ENCODE measurements at regions of chr6 and their contacts with region 1.

Region 1: GRCh38 chr6:30742316-30743098 is at the start of gene FLOT1:
- DNase-seq: peak; percentile 99
- H3K4me3 ChIP-seq: peak within 1 kb of the TSS; percentile 74 to 94 (median 87)
- H3K27ac ChIP-seq: peak within 1 kb of the TSS; percentile 89 to 98 (median 94)
- H3K4me1 ChIP-seq: peaks cover 26 to 91% (median 68%) of the 10 kb centered on the region in 6 donors
- H3K27me3 ChIP-seq: no peaks in the 10 kb centered on the region
- CTCF ChIP-seq: peak in 3 of 11 experiments; percentile 23 to 49 (median 26)
- POLR2A ChIP-seq: peak in 1 of 3 donors; percentile 28
- total RNA-seq, gene FLOT1: 125 to 205 (median 170) TPM

Region 2: GRCh38 chr6:30821862-30822782 is 79.6 kb after region 1 on chr6:
- intact Hi-C with region 1: loop called (anchors 5 kb)
- DNase-seq: no peak
- H3K4me3 ChIP-seq: no peak overlapping the region
- H3K27ac ChIP-seq: peak overlapping the region in 4 of 8 donors; percentile 7 to 61 (median 38)
- H3K4me1 ChIP-seq: peaks cover 0 to 92% (median 34%) of the 10 kb centered on the region in 6 donors
- H3K27me3 ChIP-seq: no peaks in the 10 kb centered on the region
- CTCF ChIP-seq: peak; percentile 22 to 66 (median 59)
- POLR2A ChIP-seq: no peak

Region 3: DNA sequence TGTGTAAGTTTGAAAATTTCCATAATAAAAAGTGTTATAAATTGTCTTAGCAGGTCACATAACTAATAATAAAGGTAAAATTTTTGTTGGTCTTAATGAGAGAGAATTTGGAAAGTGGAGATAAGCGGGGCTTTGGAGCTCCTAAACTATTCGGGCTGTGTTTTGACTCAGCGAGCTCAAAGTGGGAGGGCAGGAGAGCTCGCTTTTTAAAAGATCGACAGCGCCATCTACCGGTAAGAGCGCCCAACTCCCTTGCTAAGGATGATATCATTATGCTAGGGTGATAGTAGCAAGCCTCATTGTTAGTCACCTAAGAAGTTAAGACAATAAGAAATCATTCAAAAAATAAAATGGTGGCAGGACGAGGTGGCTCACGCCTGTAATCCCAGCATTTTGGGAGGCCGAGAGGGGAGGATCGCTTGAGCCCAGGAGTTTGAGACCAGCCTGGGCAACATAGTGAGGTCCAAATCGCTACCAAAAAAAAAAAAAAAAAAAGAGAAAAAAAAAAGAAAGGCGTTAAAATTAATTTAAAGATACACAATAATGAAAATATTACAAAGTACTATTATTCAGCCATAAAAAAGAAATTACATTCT is 345.1 kb after region 1 on chr6:
- intact Hi-C with region 1: loop called (anchors 10 kb)
- DNase-seq: peak; percentile 89
- H3K4me3 ChIP-seq: no peak overlapping the region
- H3K27ac ChIP-seq: no peak overlapping the region
- H3K4me1 ChIP-seq: peaks cover 0 to 16% (median 8%) of the 10 kb centered on the region in 6 donors
- H3K27me3 ChIP-seq: peaks cover 0 to 10% (median 0%) of the 10 kb centered on the region in 7 donors
- CTCF ChIP-seq: peak; percentile 59 to 92 (median 83)
- POLR2A ChIP-seq: no peak

Region 4: DNA sequence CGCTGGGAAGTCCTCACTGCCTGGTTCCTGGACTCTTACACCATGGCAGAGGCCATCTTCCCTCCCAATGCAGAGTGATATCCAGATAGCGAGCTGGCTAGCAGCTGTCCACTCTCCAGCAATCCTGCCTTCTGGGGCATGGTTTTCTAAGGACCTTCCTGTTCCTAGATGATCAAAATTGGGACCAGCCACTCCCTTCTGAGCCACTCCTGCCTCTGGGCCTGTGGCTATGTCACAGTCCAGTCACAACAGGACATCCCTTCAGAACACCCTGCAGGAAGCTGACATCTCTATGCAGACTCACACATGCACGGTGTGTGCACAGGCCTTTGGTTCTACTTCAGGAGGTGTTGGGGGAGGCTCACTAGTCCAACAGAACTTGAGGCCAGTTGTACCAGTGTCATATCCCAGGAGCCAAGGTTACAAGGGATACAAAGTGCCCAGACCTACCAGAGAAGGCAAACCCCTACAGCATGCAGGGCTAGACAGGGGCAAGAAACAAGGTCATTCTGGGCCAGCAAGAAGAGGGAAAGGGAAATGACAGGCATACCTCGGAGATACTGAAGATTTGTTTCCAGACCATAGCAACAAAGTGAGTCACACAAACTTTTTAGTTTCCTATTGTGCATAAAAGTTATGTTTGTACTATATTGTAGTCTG is 783.6 kb after region 1 on chr6:
- intact Hi-C with region 1: no loop called
- DNase-seq: no peak
- H3K4me3 ChIP-seq: no peak overlapping the region
- H3K27ac ChIP-seq: peak overlapping the region in 3 of 8 donors; percentile 22 to 51 (median 38)
- H3K4me1 ChIP-seq: peaks cover 0 to 5% (median 0%) of the 10 kb centered on the region in 6 donors
- H3K27me3 ChIP-seq: no peaks in the 10 kb centered on the region
- CTCF ChIP-seq: no peak
- POLR2A ChIP-seq: no peak

Measured in spleen (tissue), 13 donors.